HepG2 (cell line): ENCODE measurements at regions of chr6 and their contacts with region 1.

Region 1: GRCh38 chr6:70739534-70739933 is 71.9 kb downstream of the SMAP1 start:
- DNase-seq: no peak
- ATAC-seq: no peak
- H3K4me3 ChIP-seq: no peak overlapping the region
- H3K27ac ChIP-seq: no peak overlapping the region
- H3K4me1 ChIP-seq: no peaks in the 10 kb centered on the region
- H3K27me3 ChIP-seq: no peaks in the 10 kb centered on the region
- CTCF ChIP-seq: no peak
- EP300 ChIP-seq: no peak
- POLR2A ChIP-seq: no peak
- RAD21 ChIP-seq: no peak

Region 2: GRCh38 chr6:70566751-70567382 is 172.7 kb before region 1 on chr6 and contains the start of gene SDHAF4:
- CTCF ChIA-PET with region 1: no interaction called
- POLR2A ChIA-PET with region 1: no interaction called
- in situ Hi-C with region 1: no loop called
- intact Hi-C with region 1: no loop called
- DNase-seq: peak; percentile 86
- ATAC-seq: peak; percentile 98
- H3K4me3 ChIP-seq: peak within 1 kb of the TSS; percentile 69 to 84 (median 83)
- H3K27ac ChIP-seq: peak within 1 kb of the TSS; percentile 80
- H3K4me1 ChIP-seq: peaks cover 35% of the 10 kb centered on the region
- H3K27me3 ChIP-seq: no peaks in the 10 kb centered on the region
- CTCF ChIP-seq: peak; percentile 28; the same call in 1 of the 2 replicates
- EP300 ChIP-seq: no peak
- POLR2A ChIP-seq: peak; percentile 83 to 97
- RAD21 ChIP-seq: peak; percentile 49; the same call in 1 of the 2 replicates
- total RNA-seq, gene SDHAF4: 7.1 and 7.5 TPM in 2 replicates

Region 3: GRCh38 chr6:70797625-70798024 is 58.1 kb after region 1 on chr6:
- CTCF ChIA-PET with region 1: no interaction called
- POLR2A ChIA-PET with region 1: no interaction called
- in situ Hi-C with region 1: no loop called
- intact Hi-C with region 1: loop called (anchors 2 kb)
- DNase-seq: no peak
- ATAC-seq: no peak
- H3K4me3 ChIP-seq: no peak overlapping the region
- H3K27ac ChIP-seq: no peak overlapping the region
- H3K4me1 ChIP-seq: no peaks in the 10 kb centered on the region
- H3K27me3 ChIP-seq: no peaks in the 10 kb centered on the region
- CTCF ChIP-seq: no peak
- EP300 ChIP-seq: no peak
- POLR2A ChIP-seq: no peak
- RAD21 ChIP-seq: no peak